Activated CD4-positive, alpha-beta memory T cell treated with anti-CD3 and anti-CD28 coated beads for 36 hours (primary cell): ENCODE measurements at regions of chr1 and their contacts with region 1.

Region 1: GRCh38 chr1:154272217-154272998 is at the start of gene HAX1:
- DNase-seq: peak; percentile 99
- H3K4me3 Mint-ChIP-seq: peak within 1 kb of the TSS; percentile 99
- H3K27ac Mint-ChIP-seq: peak within 1 kb of the TSS; percentile 99
- H3K4me1 Mint-ChIP-seq: peaks cover 34% of the 10 kb centered on the region
- H3K27me3 Mint-ChIP-seq: no peaks in the 10 kb centered on the region
- total RNA-seq, gene HAX1: 168 to 169 TPM

Region 2: GRCh38 chr1:153805042-153805745 is 467.2 kb before region 1 on chr1:
- CTCF ChIA-PET with region 1: no interaction called
- POLR2A ChIA-PET with region 1: no interaction called
- intact Hi-C with region 1: loop called (anchors 10 kb)
- DNase-seq: peak; percentile 87
- H3K4me3 Mint-ChIP-seq: peak overlapping the region; percentile 5
- H3K27ac Mint-ChIP-seq: peak overlapping the region; percentile 81
- H3K4me1 Mint-ChIP-seq: peaks cover 30% of the 10 kb centered on the region
- H3K27me3 Mint-ChIP-seq: no peaks in the 10 kb centered on the region

Region 3: DNA sequence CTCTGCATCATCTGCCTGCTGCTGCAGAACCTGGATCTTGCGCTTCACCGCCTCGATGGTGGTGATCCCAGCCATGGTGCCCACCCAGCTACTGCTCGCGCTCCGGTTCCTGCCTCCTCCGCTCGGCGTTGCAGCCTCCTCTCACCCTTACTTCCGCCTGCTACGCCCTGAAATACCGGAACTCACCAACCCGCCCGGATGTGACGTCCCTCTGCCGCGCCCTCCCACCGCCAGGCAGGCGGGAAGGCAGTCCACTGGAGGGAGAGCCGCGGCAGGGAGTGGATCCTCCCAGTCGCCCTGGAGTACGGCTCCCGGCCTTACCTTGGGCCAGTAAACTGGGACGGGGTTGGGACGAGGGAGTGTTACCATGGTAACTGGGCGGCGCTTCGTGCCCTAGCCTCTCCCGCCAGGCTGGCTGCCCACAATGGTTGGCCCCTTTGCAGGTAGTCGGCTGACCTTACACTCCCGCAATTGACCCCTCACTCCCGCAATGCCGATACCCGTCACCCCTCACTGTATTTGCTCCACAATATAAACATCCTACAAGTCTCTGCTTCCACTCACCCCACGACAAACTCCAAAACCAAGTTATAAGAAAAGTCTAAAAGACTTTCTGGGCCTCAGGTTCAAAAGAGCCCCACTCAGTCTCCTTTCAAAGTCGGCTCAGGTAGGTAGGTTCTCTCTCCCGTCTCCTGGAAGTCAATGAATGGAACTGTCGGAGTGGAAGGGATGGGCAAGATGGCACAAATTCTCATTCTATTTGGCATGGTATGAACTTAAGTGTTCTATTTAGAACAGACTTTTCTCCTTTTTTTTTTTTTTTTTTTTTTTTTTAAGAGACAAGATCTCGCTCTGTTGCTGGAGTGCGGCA is 89.1 kb before region 1 on chr1:
- CTCF ChIA-PET with region 1: interaction called, 6 read pairs
- POLR2A ChIA-PET with region 1: interaction called, 4 read pairs
- intact Hi-C with region 1: loop called (anchors 1 kb)
- DNase-seq: peak; percentile 98
- H3K4me3 Mint-ChIP-seq: peak overlapping the region; percentile 98
- H3K27ac Mint-ChIP-seq: peak overlapping the region; percentile 96
- H3K4me1 Mint-ChIP-seq: peaks cover 37% of the 10 kb centered on the region
- H3K27me3 Mint-ChIP-seq: no peaks in the 10 kb centered on the region

Region 4: GRCh38 chr1:154213274-154213673 is 59.1 kb before region 1 on chr1:
- CTCF ChIA-PET with region 1: no interaction called
- POLR2A ChIA-PET with region 1: no interaction called
- intact Hi-C with region 1: loop called (anchors 1 kb)
- DNase-seq: no peak
- H3K4me3 Mint-ChIP-seq: no peak overlapping the region
- H3K27ac Mint-ChIP-seq: peak overlapping the region; percentile 86
- H3K4me1 Mint-ChIP-seq: peaks cover 54% of the 10 kb centered on the region
- H3K27me3 Mint-ChIP-seq: no peaks in the 10 kb centered on the region

Region 5: DNA sequence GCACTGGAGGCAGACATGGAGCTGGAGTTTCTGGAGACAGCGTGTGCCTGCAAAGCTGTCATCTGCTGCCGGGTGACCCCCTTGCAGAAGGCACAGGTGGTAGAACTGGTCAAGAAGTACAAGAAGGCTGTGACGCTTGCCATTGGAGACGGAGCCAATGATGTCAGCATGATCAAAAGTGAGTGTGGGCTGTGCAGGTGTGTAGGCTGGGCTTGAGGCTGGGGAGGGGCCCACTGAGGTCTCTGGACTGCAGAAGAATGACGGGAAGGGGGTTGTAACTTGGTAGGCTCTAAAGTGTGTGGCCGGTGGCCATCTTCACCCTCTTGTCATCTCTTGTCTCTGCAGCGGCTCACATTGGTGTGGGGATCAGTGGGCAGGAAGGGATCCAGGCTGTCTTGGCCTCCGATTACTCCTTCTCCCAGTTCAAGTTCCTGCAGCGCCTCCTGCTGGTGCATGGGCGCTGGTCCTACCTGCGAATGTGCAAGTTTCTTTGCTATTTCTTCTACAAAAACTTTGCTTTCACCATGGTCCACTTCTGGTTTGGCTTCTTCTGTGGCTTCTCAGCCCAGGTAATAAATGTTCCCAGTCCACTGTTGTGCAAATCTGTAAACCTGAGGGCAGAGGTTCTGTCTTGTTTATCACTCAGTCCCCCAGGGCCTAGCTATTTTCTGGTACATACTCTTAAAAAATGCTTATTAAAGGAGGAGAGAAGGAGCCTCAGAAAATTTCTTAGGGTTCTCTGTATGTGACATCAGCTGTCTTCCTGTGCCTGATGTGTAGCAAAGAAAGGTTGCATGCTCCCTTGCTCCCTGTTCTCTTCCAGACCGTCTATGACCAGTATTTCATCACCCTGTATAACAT is 72.8 kb after region 1 on chr1:
- CTCF ChIA-PET with region 1: interaction called, 6 read pairs
- POLR2A ChIA-PET with region 1: no interaction called
- intact Hi-C with region 1: loop called (anchors 2 kb)
- DNase-seq: peak; percentile 88
- H3K4me3 Mint-ChIP-seq: peak overlapping the region; percentile 61
- H3K27ac Mint-ChIP-seq: peak overlapping the region; percentile 95
- H3K4me1 Mint-ChIP-seq: peaks cover 77% of the 10 kb centered on the region
- H3K27me3 Mint-ChIP-seq: no peaks in the 10 kb centered on the region

Region 6: GRCh38 chr1:154943649-154944400 is 671.4 kb after region 1 on chr1:
- CTCF ChIA-PET with region 1: no interaction called
- POLR2A ChIA-PET with region 1: no interaction called
- intact Hi-C with region 1: no loop called
- DNase-seq: peak; percentile 61
- H3K4me3 Mint-ChIP-seq: peak overlapping the region; percentile 52
- H3K27ac Mint-ChIP-seq: peak overlapping the region; percentile 93
- H3K4me1 Mint-ChIP-seq: peaks cover 54% of the 10 kb centered on the region
- H3K27me3 Mint-ChIP-seq: no peaks in the 10 kb centered on the region

Region 7: GRCh38 chr1:155717041-155717440 is 1444.6 kb after region 1 on chr1:
- CTCF ChIA-PET with region 1: no interaction called
- POLR2A ChIA-PET with region 1: no interaction called
- intact Hi-C with region 1: no loop called
- DNase-seq: no peak
- H3K4me3 Mint-ChIP-seq: no peak overlapping the region
- H3K27ac Mint-ChIP-seq: no peak overlapping the region
- H3K4me1 Mint-ChIP-seq: peaks cover 13% of the 10 kb centered on the region
- H3K27me3 Mint-ChIP-seq: no peaks in the 10 kb centered on the region